HAP-1 (cell line): ENCODE measurements at regions of chr12 and their contacts with region 1.

Region 1: DNA sequence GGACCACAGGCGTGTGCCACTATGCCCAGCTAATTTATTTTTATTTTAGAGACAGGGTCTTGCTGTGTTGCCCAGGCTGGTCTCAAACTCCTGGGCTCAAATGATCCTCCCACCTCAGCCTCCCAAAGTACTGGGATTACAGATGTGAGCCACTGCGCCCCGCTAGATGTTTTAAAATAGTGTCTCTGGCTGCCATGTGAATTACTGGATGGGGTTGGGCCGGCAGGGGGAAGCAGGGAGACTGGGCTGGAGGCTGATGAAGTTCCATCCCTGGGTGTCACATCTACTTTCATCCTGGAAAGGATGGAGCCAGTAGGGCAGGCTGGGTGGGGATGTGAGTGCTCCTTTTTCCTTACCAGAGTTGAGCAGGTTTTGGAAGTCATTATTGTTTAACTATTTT is 46.1 kb downstream of the DNAH10 start:
- DNase-seq: peak in 1 of 2 experiments; percentile 24
- H3K4me3 ChIP-seq: no peak overlapping the region
- H3K4me1 ChIP-seq: no peaks in the 10 kb centered on the region
- H3K27me3 ChIP-seq: no peaks in the 10 kb centered on the region

Region 2: GRCh38 chr12:123942238-123942653 is 134.1 kb after region 1 on chr12:
- in situ Hi-C with region 1: no loop called
- DNase-seq: no peak
- H3K4me3 ChIP-seq: no peak overlapping the region
- H3K4me1 ChIP-seq: no peaks in the 10 kb centered on the region
- H3K27me3 ChIP-seq: no peaks in the 10 kb centered on the region

Region 3: GRCh38 chr12:124026755-124027745 is 218.9 kb after region 1 on chr12:
- in situ Hi-C with region 1: loop called (anchors 5 kb)
- DNase-seq: no peak
- H3K4me3 ChIP-seq: no peak overlapping the region
- H3K4me1 ChIP-seq: no peaks in the 10 kb centered on the region
- H3K27me3 ChIP-seq: no peaks in the 10 kb centered on the region